ENCODE measurements at regions of chr9 and their contacts with region 1.

Region 1: DNA sequence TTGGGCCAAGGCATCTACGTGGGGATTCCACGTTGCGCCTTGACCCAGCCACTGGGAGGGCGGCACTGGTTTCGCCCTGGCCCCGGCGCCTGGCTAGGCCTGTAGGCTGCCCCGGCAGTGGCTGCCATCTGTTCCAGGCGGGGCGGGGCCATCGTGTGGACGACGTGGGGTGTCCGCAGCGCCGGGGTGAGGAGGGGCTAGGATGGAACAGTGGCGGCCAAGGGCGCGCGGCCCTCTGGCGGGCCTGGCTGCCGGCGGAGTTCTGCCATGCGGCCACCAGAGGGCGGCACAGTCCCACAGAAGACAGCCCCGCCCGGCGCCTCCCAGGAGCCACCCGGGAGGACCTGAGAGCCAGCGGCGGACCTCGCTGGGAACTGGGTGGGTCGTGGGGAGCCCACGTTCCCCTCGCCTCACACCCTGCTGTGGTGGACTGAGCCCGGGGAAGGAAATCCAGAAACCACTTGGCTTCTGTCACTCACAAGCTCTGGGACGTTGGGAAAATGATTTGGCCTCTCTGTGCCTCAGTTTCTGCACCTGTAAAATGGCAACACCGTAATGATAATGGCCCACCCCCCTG is 22.6 kb upstream of the RAPGEF1 start:
- DNase-seq: peak; percentile 89
- ATAC-seq: peak; percentile 98
- H3K4me3 ChIP-seq: no peak overlapping the region
- H3K27ac ChIP-seq: no peak overlapping the region
- H3K4me1 ChIP-seq: no peaks in the 10 kb centered on the region
- H3K27me3 ChIP-seq: peaks cover 9% of the 10 kb centered on the region
- CTCF ChIP-seq: peak; percentile 95

Region 2: GRCh38 chr9:131986576-131986975 is 224.1 kb after region 1 on chr9:
- intact Hi-C with region 1: no loop called
- DNase-seq: no peak
- ATAC-seq: no peak
- H3K4me3 ChIP-seq: no peak overlapping the region
- H3K27ac ChIP-seq: no peak overlapping the region
- H3K4me1 ChIP-seq: no peaks in the 10 kb centered on the region
- H3K27me3 ChIP-seq: no peaks in the 10 kb centered on the region
- CTCF ChIP-seq: no peak

Region 3: GRCh38 chr9:132235946-132236661 is 473.7 kb after region 1 on chr9:
- intact Hi-C with region 1: loop called (anchors 5 kb)
- DNase-seq: peak; percentile 86
- ATAC-seq: peak; percentile 37
- H3K4me3 ChIP-seq: no peak overlapping the region
- H3K27ac ChIP-seq: no peak overlapping the region
- H3K4me1 ChIP-seq: peaks cover 5% of the 10 kb centered on the region
- H3K27me3 ChIP-seq: no peaks in the 10 kb centered on the region
- CTCF ChIP-seq: peak; percentile 96